ENCODE measurements at regions of chr1 and their contacts with region 1.

Region 1: GRCh38 chr1:108963052-108963686 is at the start of gene CLCC1:
- DNase-seq: peak; percentile 78 to 92 (median 89)
- ATAC-seq: peak; percentile 97
- H3K4me3 ChIP-seq: peak within 1 kb of the TSS; percentile 76
- H3K4me3 Mint-ChIP-seq: peak within 1 kb of the TSS; percentile 87 to 94 (median 90)
- H3K27ac ChIP-seq: peak within 1 kb of the TSS; percentile 85
- H3K27ac Mint-ChIP-seq: peak within 1 kb of the TSS; percentile 78 to 97 (median 92)
- H3K4me1 ChIP-seq: peaks cover 11 to 16% of the 10 kb centered on the region in 2 donors
- H3K4me1 Mint-ChIP-seq: peaks cover 21 to 48% (median 37%) of the 10 kb centered on the region in 7 donors
- H3K27me3 ChIP-seq: no peaks in the 10 kb centered on the region
- H3K27me3 Mint-ChIP-seq: peaks cover 0 to 15% (median 0%) of the 10 kb centered on the region in 5 donors
- total RNA-seq, gene CLCC1: 15.4 to 34.6 (median 25.2) TPM

Region 2: GRCh38 chr1:108316545-108316944 is 646.6 kb before region 1 on chr1:
- CTCF ChIA-PET with region 1: no interaction called
- POLR2A ChIA-PET with region 1: no interaction called
- intact Hi-C with region 1: no loop called
- DNase-seq: no peak
- ATAC-seq: no peak
- H3K4me3 ChIP-seq: no peak overlapping the region
- H3K4me3 Mint-ChIP-seq: no peak overlapping the region
- H3K27ac ChIP-seq: no peak overlapping the region
- H3K27ac Mint-ChIP-seq: no peak overlapping the region
- H3K4me1 ChIP-seq: no peaks in the 10 kb centered on the region
- H3K4me1 Mint-ChIP-seq: no peaks in the 10 kb centered on the region
- H3K27me3 ChIP-seq: no peaks in the 10 kb centered on the region
- H3K27me3 Mint-ChIP-seq: peaks cover 21 to 39% (median 30%) of the 10 kb centered on the region in 5 donors

Region 3: DNA sequence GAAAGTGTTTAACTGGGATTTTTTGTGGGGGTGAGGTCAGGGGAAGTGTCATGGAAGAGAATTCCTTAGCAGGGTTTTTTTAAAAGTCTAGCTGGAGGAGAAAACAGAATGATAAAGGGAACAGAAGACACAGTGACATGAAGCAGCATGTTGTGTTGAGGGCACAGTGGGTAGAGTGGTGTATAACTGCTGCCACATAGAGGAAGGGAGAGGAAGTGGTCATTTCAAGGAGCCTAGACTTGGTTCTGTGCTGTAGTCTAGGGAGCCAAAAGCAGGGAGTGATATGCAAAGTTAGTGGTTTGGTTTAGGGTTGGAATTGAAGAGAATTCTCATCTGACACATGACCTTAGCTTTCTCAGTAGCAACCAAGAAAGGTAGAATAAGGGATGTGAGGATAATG is 393.0 kb before region 1 on chr1:
- CTCF ChIA-PET with region 1: no interaction called
- POLR2A ChIA-PET with region 1: no interaction called
- intact Hi-C with region 1: no loop called
- DNase-seq: peak in 4 of 9 donors; percentile 13 to 37 (median 20)
- ATAC-seq: peak; percentile 96
- H3K4me3 ChIP-seq: no peak overlapping the region
- H3K4me3 Mint-ChIP-seq: no peak overlapping the region
- H3K27ac ChIP-seq: no peak overlapping the region
- H3K27ac Mint-ChIP-seq: no peak overlapping the region
- H3K4me1 ChIP-seq: peaks cover 0 to 6% of the 10 kb centered on the region in 2 donors
- H3K4me1 Mint-ChIP-seq: peaks cover 0 to 6% (median 4%) of the 10 kb centered on the region in 7 donors
- H3K27me3 ChIP-seq: no peaks in the 10 kb centered on the region
- H3K27me3 Mint-ChIP-seq: no peaks in the 10 kb centered on the region

Region 4: GRCh38 chr1:108877348-108878159 is 85.6 kb before region 1 on chr1:
- CTCF ChIA-PET with region 1: no interaction called
- POLR2A ChIA-PET with region 1: no interaction called
- intact Hi-C with region 1: loop called in 1 of 2 experiments (anchors 2 kb)
- DNase-seq: peak in 1 of 9 donors; percentile 0
- ATAC-seq: no peak
- H3K4me3 ChIP-seq: peak overlapping the region; percentile 68
- H3K4me3 Mint-ChIP-seq: peak overlapping the region; percentile 88 to 96 (median 92)
- H3K27ac ChIP-seq: peak overlapping the region; percentile 29
- H3K27ac Mint-ChIP-seq: peak overlapping the region in 7 of 9 donors; percentile 2 to 87 (median 58)
- H3K4me1 ChIP-seq: peaks cover 0 to 4% of the 10 kb centered on the region in 2 donors
- H3K4me1 Mint-ChIP-seq: peaks cover 0 to 27% (median 12%) of the 10 kb centered on the region in 7 donors
- H3K27me3 ChIP-seq: no peaks in the 10 kb centered on the region
- H3K27me3 Mint-ChIP-seq: peaks cover 3 to 17% (median 6%) of the 10 kb centered on the region in 5 donors

Region 5: GRCh38 chr1:108925920-108926319 is 37.2 kb before region 1 on chr1:
- CTCF ChIA-PET with region 1: no interaction called
- POLR2A ChIA-PET with region 1: no interaction called
- intact Hi-C with region 1: no loop called
- DNase-seq: no peak
- ATAC-seq: no peak
- H3K4me3 ChIP-seq: no peak overlapping the region
- H3K4me3 Mint-ChIP-seq: no peak overlapping the region
- H3K27ac ChIP-seq: no peak overlapping the region
- H3K27ac Mint-ChIP-seq: no peak overlapping the region
- H3K4me1 ChIP-seq: no peaks in the 10 kb centered on the region
- H3K4me1 Mint-ChIP-seq: no peaks in the 10 kb centered on the region
- H3K27me3 ChIP-seq: no peaks in the 10 kb centered on the region
- H3K27me3 Mint-ChIP-seq: no peaks in the 10 kb centered on the region

Region 6: DNA sequence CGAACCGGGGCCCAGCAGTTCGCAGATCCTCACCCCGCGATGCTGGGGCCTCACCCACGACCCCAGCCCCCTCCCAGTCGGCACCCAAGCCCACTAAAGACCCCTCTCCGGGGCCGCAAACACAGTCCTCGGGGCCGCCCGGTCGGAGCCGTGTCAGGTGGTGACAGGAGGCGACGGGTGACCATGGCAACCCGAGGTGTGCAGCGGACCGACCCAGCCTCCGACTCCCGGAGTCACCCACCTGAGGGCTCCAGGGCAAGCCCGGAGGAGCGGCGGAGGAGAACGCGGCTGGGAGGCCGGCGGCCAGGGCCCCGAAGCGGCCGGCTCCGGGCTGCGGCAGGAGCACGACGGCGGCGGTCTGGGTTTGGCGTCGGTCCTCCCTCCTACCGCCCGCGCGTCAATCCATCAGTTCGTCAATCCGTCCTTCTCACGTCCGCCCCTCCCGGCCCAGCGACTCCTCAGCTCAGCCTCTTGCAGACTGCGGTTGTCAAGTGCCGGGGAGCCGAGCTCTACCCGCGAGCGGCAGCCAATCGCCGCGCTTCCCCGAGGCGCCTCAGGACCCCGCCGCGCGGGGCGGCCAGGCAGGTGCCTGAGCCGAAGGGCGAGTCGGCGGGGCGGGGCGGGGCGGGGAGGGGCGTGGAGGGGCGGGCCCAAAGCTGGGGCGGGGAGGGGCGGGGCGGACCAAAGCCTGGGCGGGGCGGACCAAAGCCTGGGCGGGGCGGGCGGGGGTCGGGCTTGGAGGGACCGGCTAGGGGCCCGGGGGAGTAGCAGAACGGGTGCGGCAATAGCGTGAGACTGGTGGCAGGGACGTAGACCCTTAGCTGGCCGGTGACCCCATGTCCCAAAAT is 78.7 kb after region 1 on chr1 and contains the start of gene WDR47:
- CTCF ChIA-PET with region 1: interaction called, 3 read pairs
- POLR2A ChIA-PET with region 1: interaction called, 10 read pairs
- intact Hi-C with region 1: loop called (anchors 1 kb)
- DNase-seq: peak; percentile 95 to 97 (median 96)
- ATAC-seq: peak; percentile 99
- H3K4me3 ChIP-seq: peak within 1 kb of the TSS; percentile 97
- H3K4me3 Mint-ChIP-seq: peak within 1 kb of the TSS; percentile 86 to 97 (median 94)
- H3K27ac ChIP-seq: peak within 1 kb of the TSS; percentile 90
- H3K27ac Mint-ChIP-seq: peak within 1 kb of the TSS; percentile 78 to 97 (median 91)
- H3K4me1 ChIP-seq: peaks cover 0 to 7% of the 10 kb centered on the region in 2 donors
- H3K4me1 Mint-ChIP-seq: peaks cover 7 to 25% (median 16%) of the 10 kb centered on the region in 7 donors
- H3K27me3 ChIP-seq: no peaks in the 10 kb centered on the region
- H3K27me3 Mint-ChIP-seq: peaks cover 0 to 7% (median 0%) of the 10 kb centered on the region in 5 donors
- total RNA-seq, gene WDR47: 9.8 to 15.4 (median 14.4) TPM

Region 7: GRCh38 chr1:109090196-109091077 is 127.3 kb after region 1 on chr1 and contains the start of gene TMEM167B:
- CTCF ChIA-PET with region 1: no interaction called
- POLR2A ChIA-PET with region 1: no interaction called
- intact Hi-C with region 1: loop called (anchors 1 to 5 kb)
- DNase-seq: peak; percentile 71 to 92 (median 87)
- ATAC-seq: peak; percentile 98
- H3K4me3 ChIP-seq: peak within 1 kb of the TSS; percentile 84
- H3K4me3 Mint-ChIP-seq: peak within 1 kb of the TSS; percentile 88 to 98 (median 96)
- H3K27ac ChIP-seq: peak within 1 kb of the TSS; percentile 97
- H3K27ac Mint-ChIP-seq: peak within 1 kb of the TSS; percentile 90 to 99 (median 98)
- H3K4me1 ChIP-seq: peaks cover 14 to 18% of the 10 kb centered on the region in 2 donors
- H3K4me1 Mint-ChIP-seq: peaks cover 15 to 43% (median 36%) of the 10 kb centered on the region in 7 donors
- H3K27me3 ChIP-seq: no peaks in the 10 kb centered on the region
- H3K27me3 Mint-ChIP-seq: no peaks in the 10 kb centered on the region
- total RNA-seq, gene TMEM167B: 33.2 to 65.6 (median 41.2) TPM

Region 8: GRCh38 chr1:109099938-109100773 is 137.0 kb after region 1 on chr1:
- CTCF ChIA-PET with region 1: no interaction called
- POLR2A ChIA-PET with region 1: interaction called, 13 read pairs
- intact Hi-C with region 1: loop called in 1 of 2 experiments (anchors 1 kb)
- DNase-seq: peak; percentile 90 to 98 (median 97)
- ATAC-seq: peak; percentile 98
- H3K4me3 ChIP-seq: peak overlapping the region; percentile 80
- H3K4me3 Mint-ChIP-seq: peak overlapping the region; percentile 93 to 99 (median 98)
- H3K27ac ChIP-seq: peak overlapping the region; percentile 88
- H3K27ac Mint-ChIP-seq: peak overlapping the region; percentile 92 to 99 (median 96)
- H3K4me1 ChIP-seq: peaks cover 0 to 5% of the 10 kb centered on the region in 2 donors
- H3K4me1 Mint-ChIP-seq: peaks cover 5 to 22% (median 13%) of the 10 kb centered on the region in 7 donors
- H3K27me3 ChIP-seq: no peaks in the 10 kb centered on the region
- H3K27me3 Mint-ChIP-seq: peaks cover 0 to 2% (median 0%) of the 10 kb centered on the region in 5 donors

Region 9: GRCh38 chr1:109282952-109283747 is 320.0 kb after region 1 on chr1 and contains the start of gene PSRC1:
- CTCF ChIA-PET with region 1: no interaction called
- POLR2A ChIA-PET with region 1: no interaction called
- intact Hi-C with region 1: loop called in 1 of 2 experiments (anchors 10 kb)
- DNase-seq: peak; percentile 78 to 94 (median 88)
- ATAC-seq: peak; percentile 98
- H3K4me3 ChIP-seq: peak within 1 kb of the TSS; percentile 92
- H3K4me3 Mint-ChIP-seq: peak within 1 kb of the TSS; percentile 89 to 99 (median 96)
- H3K27ac ChIP-seq: peak within 1 kb of the TSS; percentile 65
- H3K27ac Mint-ChIP-seq: peak within 1 kb of the TSS; percentile 55 to 94 (median 88)
- H3K4me1 ChIP-seq: peaks cover 8 to 11% of the 10 kb centered on the region in 2 donors
- H3K4me1 Mint-ChIP-seq: peaks cover 6 to 29% (median 14%) of the 10 kb centered on the region in 7 donors
- H3K27me3 ChIP-seq: no peaks in the 10 kb centered on the region
- H3K27me3 Mint-ChIP-seq: peaks cover 0 to 8% (median 0%) of the 10 kb centered on the region in 5 donors
- total RNA-seq, gene PSRC1: 0.38 to 16.1 (median 1.3) TPM in 4 of 5 experiments, not detected in the other

Region 10: DNA sequence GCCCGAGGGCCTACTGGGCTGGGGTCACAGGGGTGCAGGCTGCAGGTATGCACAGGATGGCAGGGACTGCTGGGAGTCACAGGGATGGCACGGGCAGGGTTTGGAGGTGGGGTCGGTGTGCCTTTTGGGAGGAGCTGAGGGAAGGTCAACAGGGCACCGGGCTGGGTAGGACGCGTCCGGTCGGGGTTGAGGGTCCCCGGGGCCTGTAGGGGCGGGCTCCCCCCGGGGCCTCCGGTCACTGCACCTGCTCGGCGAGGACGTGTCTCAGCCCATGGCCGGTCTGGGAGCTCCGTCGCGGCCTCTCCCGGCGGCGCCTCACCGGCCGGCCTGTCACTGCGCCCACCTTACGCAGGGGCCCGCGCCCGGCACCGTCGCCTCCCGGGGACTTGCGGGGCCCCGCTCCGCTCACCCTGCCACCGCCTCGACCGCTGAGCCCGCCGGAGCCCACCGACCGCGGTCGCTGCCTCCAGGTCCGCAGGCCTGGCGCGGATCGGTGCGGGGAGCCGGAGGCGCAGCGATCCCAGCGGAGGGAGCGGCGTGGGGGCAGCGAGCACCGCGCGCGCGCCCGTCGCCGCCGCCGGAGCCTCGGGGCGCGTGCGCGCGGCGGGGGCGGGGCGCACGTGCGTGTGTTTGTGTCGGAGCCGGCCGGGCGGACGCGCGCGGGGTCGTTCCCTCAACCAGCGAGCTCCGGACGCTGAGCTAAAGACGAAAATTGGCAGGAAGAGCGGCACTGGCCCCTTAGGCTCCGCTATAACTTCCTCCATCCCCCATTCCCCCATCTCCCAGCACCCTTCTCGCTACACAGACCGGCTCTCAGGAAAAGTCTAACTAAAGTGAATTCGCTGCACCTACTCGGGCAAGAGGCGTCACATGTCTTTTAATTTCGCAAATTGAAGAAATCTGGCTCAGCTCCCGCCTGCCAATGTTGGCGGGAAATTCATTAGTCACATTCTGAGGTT is 546.3 kb after region 1 on chr1 and contains the start of gene AMIGO1:
- CTCF ChIA-PET with region 1: no interaction called
- POLR2A ChIA-PET with region 1: no interaction called
- intact Hi-C with region 1: loop called in 1 of 2 experiments (anchors 10 kb)
- DNase-seq: peak; percentile 61 to 76 (median 71)
- ATAC-seq: peak; percentile 88
- H3K4me3 ChIP-seq: peak within 1 kb of the TSS; percentile 75
- H3K4me3 Mint-ChIP-seq: peak within 1 kb of the TSS; percentile 91 to 97 (median 96)
- H3K27ac ChIP-seq: peak within 1 kb of the TSS; percentile 81
- H3K27ac Mint-ChIP-seq: peak within 1 kb of the TSS in 8 of 9 donors; percentile 94 to 99 (median 98)
- H3K4me1 ChIP-seq: peaks cover 22 to 58% of the 10 kb centered on the region in 2 donors
- H3K4me1 Mint-ChIP-seq: peaks cover 37 to 75% (median 68%) of the 10 kb centered on the region in 7 donors
- H3K27me3 ChIP-seq: no peaks in the 10 kb centered on the region
- H3K27me3 Mint-ChIP-seq: peaks cover 0 to 47% (median 0%) of the 10 kb centered on the region in 5 donors
- total RNA-seq, gene AMIGO1: 2.9 to 42.2 (median 17.7) TPM

Measured in naive thymus-derived CD4-positive, alpha-beta T cell (primary cell).